ENCODE measurements at regions of chr5 and their contacts with region 1.

Region 1: GRCh38 chr5:140700177-140701144 is at the start of gene ZMAT2:
- DNase-seq: peak; percentile 94
- ATAC-seq: peak; percentile 99
- H3K4me3 ChIP-seq: peak within 1 kb of the TSS; percentile 90
- H3K27ac ChIP-seq: no peak within 1 kb of the TSS
- H3K4me1 ChIP-seq: peaks cover 6% of the 10 kb centered on the region
- H3K27me3 ChIP-seq: no peaks in the 10 kb centered on the region
- CTCF ChIP-seq: no peak
- total RNA-seq, gene ZMAT2: 28.2 and 36.8 TPM in 2 replicates

Region 2: GRCh38 chr5:140710899-140711552 is 10.6 kb after region 1 on chr5:
- CTCF ChIA-PET with region 1: no interaction called
- POLR2A ChIA-PET with region 1: interaction called, 10 read pairs
- intact Hi-C with region 1: no loop called
- DNase-seq: peak; percentile 99
- ATAC-seq: peak; percentile 94
- H3K4me3 ChIP-seq: peak overlapping the region; percentile 91
- H3K27ac ChIP-seq: peak overlapping the region; percentile 85
- H3K4me1 ChIP-seq: peaks cover 8% of the 10 kb centered on the region; the same call in 1 of the 2 replicates
- H3K27me3 ChIP-seq: no peaks in the 10 kb centered on the region
- CTCF ChIP-seq: no peak

Region 3: GRCh38 chr5:141691867-141692532 is 991.5 kb after region 1 on chr5:
- CTCF ChIA-PET with region 1: no interaction called
- POLR2A ChIA-PET with region 1: no interaction called
- intact Hi-C with region 1: no loop called
- DNase-seq: peak; percentile 85
- ATAC-seq: peak; percentile 86
- H3K4me3 ChIP-seq: peak overlapping the region; percentile 57
- H3K27ac ChIP-seq: no peak overlapping the region
- H3K4me1 ChIP-seq: peaks cover 16% of the 10 kb centered on the region
- H3K27me3 ChIP-seq: no peaks in the 10 kb centered on the region
- CTCF ChIP-seq: peak; percentile 80

Measured in PC-3 (cell line).